Left ventricle myocardium superior (tissue), 1 donor: ENCODE measurements at regions of chr1 and their contacts with region 1.

Region 1: GRCh38 chr1:21511579-21512522 is 2.6 kb downstream of the ALPL start:
- DNase-seq: peak; percentile 69
- ATAC-seq: peak; percentile 71

Region 2: DNA sequence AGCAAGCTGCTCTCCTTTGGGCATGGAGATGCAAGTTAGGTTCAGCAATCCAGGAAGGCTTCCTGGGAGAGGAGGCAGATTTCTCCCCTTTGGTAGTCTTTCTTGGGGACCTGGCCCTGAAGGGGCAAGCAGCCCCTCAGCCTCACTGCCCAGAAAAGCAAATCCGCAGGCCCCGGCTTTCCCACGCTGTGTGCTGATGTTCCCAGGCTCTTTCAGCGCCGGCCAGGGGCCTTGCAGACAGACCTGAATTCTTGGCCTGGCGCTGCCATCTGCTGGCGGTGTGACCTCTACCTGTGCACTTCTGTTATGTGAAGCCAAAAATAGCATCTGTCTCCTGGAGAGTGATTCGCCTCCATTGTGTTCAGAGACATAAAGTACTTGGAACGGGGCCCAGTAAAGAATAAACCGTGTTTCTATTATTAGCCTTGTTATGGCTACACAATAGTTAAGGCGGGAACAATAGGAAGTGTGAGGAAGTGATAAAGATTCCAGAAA is 62.2 kb after region 1 on chr1:
- intact Hi-C with region 1: loop called (anchors 10 kb)
- DNase-seq: peak; percentile 91
- ATAC-seq: peak; percentile 93